ENCODE measurements at regions of chr7 and their contacts with region 1.

Region 1: DNA sequence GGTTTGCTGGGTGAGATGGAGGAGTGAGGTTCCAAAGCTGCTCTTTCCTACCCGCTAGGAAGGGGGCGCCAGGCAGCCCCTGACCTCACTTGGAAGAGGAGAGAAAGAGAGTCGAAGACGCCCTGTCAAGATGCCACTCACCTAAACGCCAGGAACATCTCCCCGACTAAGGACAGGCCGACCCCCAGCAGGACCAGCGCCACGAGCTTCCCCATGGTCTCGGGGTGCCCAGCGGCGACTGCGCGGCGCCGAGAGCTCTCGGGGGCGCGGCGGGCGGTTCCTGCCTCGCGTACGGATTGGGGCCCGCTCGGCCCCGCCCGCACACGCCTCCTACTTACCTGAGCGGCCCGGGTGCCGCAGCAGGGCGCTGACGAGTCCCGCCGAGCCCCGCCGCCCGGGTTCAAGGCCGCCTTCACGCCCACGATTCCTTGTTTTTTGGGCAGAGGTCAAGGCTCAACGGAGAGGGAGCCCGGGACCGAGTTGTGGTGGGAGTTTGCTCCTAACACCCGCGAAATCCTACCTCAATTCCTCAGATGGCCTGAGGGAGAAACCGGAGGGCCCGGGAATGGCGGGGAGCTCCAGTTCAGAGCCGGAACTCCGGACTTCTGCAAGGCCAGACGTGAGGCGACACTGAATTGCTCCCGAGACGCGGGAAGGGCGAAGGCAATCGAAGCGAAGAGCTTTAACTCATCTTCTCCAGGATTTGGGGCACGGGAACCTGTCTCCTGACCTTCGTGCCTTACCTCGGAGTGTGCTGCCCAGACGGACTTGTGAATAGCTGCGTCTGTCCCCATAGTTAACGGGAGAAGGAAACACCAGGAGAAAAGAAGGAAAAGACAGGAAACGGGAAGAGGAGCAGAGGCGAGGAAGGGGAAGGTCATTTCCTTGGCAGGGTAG is at the start of gene PON3:
- DNase-seq: peak; percentile 68
- H3K4me3 ChIP-seq: peak within 1 kb of the TSS; percentile 33 to 56 (median 50)
- H3K27ac ChIP-seq: no peak within 1 kb of the TSS
- H3K4me1 ChIP-seq: peaks cover 0 to 12% (median 5%) of the 10 kb centered on the region in 4 donors
- H3K27me3 ChIP-seq: peaks cover 0 to 13% (median 0%) of the 10 kb centered on the region in 3 donors
- CTCF ChIP-seq: peak in 1 of 4 experiments; percentile 9
- EP300 ChIP-seq: no peak
- POLR2A ChIP-seq: no peak
- total RNA-seq, gene PON3: 0.68 to 1.7 (median 1.5) TPM

Region 2: DNA sequence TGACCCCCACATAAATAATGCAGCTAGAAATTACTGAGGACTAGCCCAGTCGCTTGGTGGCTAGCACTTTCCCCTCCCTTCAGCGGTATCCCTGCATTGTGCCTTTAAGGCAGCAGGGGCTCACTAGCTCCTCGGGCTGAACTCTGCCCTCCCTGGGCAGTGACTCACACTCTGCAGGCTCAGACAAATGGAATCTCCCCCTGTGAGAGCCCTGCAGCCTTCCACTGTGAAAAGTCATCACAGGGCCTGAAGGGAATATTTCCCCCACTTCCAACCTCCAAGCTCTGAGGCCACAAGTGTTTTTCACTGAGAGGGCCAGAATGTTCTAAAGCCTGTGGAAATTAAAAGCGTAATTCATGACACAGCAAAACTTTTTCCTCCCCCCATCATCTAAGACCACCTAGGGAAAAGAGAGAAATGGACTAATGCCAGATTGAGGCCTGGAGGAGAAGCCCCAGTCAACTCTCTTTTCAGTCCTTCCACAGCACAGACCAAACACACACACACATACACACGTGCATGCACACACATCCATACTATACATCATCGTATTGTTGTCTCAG is 1095.3 kb before region 1 on chr7:
- intact Hi-C with region 1: no loop called
- DNase-seq: peak; percentile 91
- H3K4me3 ChIP-seq: no peak overlapping the region
- H3K27ac ChIP-seq: peak overlapping the region; percentile 78 to 93 (median 88)
- H3K4me1 ChIP-seq: peaks cover 0 to 79% (median 67%) of the 10 kb centered on the region in 4 donors
- H3K27me3 ChIP-seq: no peaks in the 10 kb centered on the region
- CTCF ChIP-seq: no peak
- EP300 ChIP-seq: peak in 1 of 4 donors; percentile 15
- POLR2A ChIP-seq: no peak

Region 3: DNA sequence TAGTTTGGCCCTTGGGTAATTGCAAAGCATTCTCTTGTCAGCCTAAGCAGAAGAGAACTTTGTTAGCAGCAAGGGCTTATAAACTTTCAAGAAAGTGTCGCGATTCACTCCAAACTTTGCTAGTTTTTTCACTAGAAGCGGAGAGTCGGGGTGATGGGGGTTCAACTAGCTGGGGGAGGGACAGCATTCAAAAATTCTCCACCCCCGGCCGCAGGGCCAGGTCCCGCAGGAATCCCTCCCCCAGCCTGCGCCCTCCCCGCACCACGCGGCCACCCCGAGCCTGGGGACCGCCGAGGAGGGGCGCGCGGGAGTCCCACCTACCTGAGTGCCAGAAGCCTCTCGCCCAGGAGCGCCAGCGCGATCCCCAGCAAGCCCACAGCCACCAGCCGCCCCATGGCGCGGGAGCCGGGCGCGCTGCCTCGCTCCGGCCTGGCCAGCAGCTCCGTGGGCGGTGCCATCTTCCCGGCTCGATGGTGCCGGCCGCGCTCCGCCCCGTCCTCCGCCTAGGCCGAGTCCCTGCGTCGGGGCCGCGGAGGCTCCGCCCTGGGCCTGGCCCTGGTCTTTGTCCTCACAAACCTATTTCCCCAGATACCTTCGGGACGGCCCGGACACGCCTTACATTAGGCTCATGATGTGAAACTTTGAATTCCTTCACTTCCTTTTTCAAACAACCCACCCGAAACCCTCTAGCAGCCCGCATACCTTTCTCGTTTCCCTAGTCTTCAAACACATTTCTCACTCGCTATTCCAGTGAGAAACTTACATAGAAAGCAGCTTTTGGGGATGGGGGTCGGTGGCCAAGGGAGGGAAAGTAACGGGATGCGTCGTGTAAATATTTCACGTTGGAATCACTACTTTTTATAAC is 38.4 kb after region 1 on chr7 and contains the start of gene PON2:
- intact Hi-C with region 1: loop called (anchors 5 kb)
- DNase-seq: peak; percentile 87
- H3K4me3 ChIP-seq: peak within 1 kb of the TSS; percentile 72 to 83 (median 78)
- H3K27ac ChIP-seq: peak within 1 kb of the TSS; percentile 90 to 94 (median 92)
- H3K4me1 ChIP-seq: peaks cover 0 to 15% (median 3%) of the 10 kb centered on the region in 4 donors
- H3K27me3 ChIP-seq: no peaks in the 10 kb centered on the region
- CTCF ChIP-seq: no peak
- EP300 ChIP-seq: no peak
- POLR2A ChIP-seq: no peak
- total RNA-seq, gene PON2: 66.3 to 103 (median 84.2) TPM